IMR-90 (cell line): ENCODE measurements at regions of chr2 and their contacts with region 1.

Region 1: GRCh38 chr2:65432227-65433190 is at the start of gene SPRED2:
- DNase-seq: peak; percentile 97
- ATAC-seq: peak; percentile 53
- H3K4me3 ChIP-seq: peak within 1 kb of the TSS; percentile 88
- H3K27ac ChIP-seq: peak within 1 kb of the TSS; percentile 79
- H3K4me1 ChIP-seq: peaks cover 7% of the 10 kb centered on the region; the same call in 1 of the 2 replicates
- H3K27me3 ChIP-seq: no peaks in the 10 kb centered on the region
- CTCF ChIP-seq: 0 out of 2 replicates have a peak, but pooled peaks have one; percentile 6
- POLR2A ChIP-seq: peak; percentile 81
- RAD21 ChIP-seq: peak; percentile 26; the same call in 1 of the 2 replicates
- total RNA-seq, gene SPRED2: 4.7 and 4.8 TPM in 2 replicates

Region 2: DNA sequence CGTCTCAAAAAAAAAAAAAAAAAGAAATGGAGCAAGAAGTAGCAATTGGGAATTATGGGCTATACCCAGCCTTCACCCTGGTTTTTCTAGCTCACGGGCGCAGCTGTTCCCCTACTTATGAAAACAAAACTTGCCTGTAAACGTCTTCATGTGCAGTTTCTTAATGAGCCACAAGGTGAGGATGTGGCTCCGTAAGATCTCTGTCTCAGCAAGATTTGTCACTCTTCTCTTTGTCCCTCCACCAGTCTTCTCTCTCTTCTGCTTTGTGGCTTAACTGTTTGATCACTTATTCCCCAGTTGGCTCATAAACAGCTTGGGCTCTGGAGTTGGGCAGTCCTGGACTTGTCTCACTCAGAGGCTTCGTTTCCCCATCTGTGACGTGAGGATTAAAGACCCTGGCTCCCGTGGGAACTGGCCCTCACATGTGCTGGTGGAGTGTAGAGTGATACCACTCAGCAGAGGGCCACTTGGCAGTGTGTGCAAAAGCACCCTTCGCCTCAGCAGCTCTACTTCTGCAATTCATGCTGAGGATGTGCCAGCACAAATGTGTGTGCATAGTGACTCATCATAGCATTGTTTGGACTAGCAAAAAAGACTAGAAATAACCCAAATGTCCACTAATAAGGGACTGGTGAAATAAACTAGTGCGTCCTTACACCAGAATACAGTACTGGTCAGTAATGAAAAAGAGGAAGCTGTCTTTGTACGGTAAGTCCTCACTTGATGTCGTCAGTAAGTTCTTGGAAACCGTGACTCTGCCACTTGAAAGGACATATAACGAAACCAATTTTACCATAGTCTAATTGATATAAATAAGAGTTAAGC is 367.6 kb before region 1 on chr2:
- CTCF ChIA-PET with region 1: no interaction called
- POLR2A ChIA-PET with region 1: no interaction called
- dilution Hi-C with region 1: no loop called
- in situ Hi-C with region 1: no loop called
- intact Hi-C with region 1: loop called (anchors 10 kb)
- DNase-seq: peak; percentile 96
- ATAC-seq: peak; percentile 83
- H3K4me3 ChIP-seq: no peak overlapping the region
- H3K27ac ChIP-seq: peak overlapping the region; percentile 35; the same call in 1 of the 2 replicates
- H3K4me1 ChIP-seq: peaks cover 26% of the 10 kb centered on the region
- H3K27me3 ChIP-seq: no peaks in the 10 kb centered on the region
- CTCF ChIP-seq: peak; percentile 52
- POLR2A ChIP-seq: peak; percentile 14; the same call in 1 of the 2 replicates
- RAD21 ChIP-seq: peak; percentile 62

Region 3: GRCh38 chr2:65300761-65301711 is 131.5 kb before region 1 on chr2:
- CTCF ChIA-PET with region 1: no interaction called
- POLR2A ChIA-PET with region 1: no interaction called
- dilution Hi-C with region 1: no loop called
- in situ Hi-C with region 1: no loop called
- intact Hi-C with region 1: loop called (anchors 1 kb)
- DNase-seq: peak; percentile 89
- ATAC-seq: peak; percentile 90
- H3K4me3 ChIP-seq: peak overlapping the region; percentile 12; the same call in 1 of the 2 replicates
- H3K27ac ChIP-seq: peak overlapping the region; percentile 80
- H3K4me1 ChIP-seq: peaks cover 23% of the 10 kb centered on the region
- H3K27me3 ChIP-seq: no peaks in the 10 kb centered on the region
- CTCF ChIP-seq: no peak
- POLR2A ChIP-seq: peak; percentile 27; the same call in 1 of the 2 replicates
- RAD21 ChIP-seq: no peak

Region 4: DNA sequence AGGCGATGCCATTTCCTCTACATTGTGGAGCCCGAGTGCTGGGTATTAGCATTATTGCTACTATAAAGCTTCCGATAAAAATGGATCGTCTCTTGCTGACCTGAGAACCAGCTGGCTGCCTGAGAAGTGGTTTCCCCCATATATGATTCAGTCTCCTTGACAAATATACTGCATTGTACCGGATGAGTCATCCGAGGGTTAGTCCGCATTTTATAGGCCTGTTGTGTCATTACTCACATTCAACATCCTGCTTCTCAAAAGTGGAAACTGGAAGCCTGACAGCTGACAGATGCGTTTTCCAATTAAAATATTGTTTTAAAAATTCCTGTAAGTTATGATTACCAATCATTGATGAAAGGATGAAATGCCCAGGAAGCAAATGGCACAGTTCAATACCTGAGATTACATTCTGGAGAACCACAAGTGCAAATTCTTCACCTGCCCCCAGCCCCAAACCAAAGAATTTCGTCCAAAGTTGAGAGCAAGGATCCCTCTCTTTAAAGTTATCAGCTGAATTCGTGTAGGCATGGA is 65.8 kb before region 1 on chr2:
- CTCF ChIA-PET with region 1: no interaction called
- POLR2A ChIA-PET with region 1: no interaction called
- dilution Hi-C with region 1: no loop called
- in situ Hi-C with region 1: no loop called
- intact Hi-C with region 1: loop called (anchors 5 kb)
- DNase-seq: peak; percentile 98
- ATAC-seq: peak; percentile 68
- H3K4me3 ChIP-seq: no peak overlapping the region
- H3K27ac ChIP-seq: peak overlapping the region; percentile 21; the same call in 1 of the 2 replicates
- H3K4me1 ChIP-seq: peaks cover 21% of the 10 kb centered on the region
- H3K27me3 ChIP-seq: no peaks in the 10 kb centered on the region
- CTCF ChIP-seq: no peak
- POLR2A ChIP-seq: peak; percentile 63; the same call in 1 of the 2 replicates
- RAD21 ChIP-seq: no peak

Region 5: DNA sequence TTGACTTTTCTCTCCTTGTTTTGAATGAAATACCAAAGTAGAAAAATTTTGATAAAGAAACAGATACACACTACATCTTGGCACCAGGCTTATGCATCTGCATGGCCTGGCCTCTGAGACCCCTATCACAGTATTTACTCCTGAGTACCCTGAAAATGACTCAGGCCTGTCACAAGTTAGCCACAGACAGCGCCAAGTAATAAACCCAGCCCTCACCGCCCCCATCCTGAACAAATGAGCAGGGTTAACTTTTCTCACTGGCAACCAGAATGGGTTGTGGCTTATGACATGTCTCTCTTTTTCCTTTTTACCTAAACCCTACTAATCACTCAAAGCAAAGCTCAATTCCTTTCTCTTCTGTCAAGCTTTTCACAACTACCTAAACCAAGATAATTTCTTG is 35.4 kb before region 1 on chr2:
- CTCF ChIA-PET with region 1: no interaction called
- POLR2A ChIA-PET with region 1: no interaction called
- dilution Hi-C with region 1: no loop called
- in situ Hi-C with region 1: no loop called
- intact Hi-C with region 1: no loop called
- DNase-seq: peak; percentile 47
- ATAC-seq: peak; percentile 38
- H3K4me3 ChIP-seq: no peak overlapping the region
- H3K27ac ChIP-seq: no peak overlapping the region
- H3K4me1 ChIP-seq: peaks cover 11% of the 10 kb centered on the region
- H3K27me3 ChIP-seq: no peaks in the 10 kb centered on the region
- CTCF ChIP-seq: no peak
- POLR2A ChIP-seq: no peak
- RAD21 ChIP-seq: no peak

Region 6: DNA sequence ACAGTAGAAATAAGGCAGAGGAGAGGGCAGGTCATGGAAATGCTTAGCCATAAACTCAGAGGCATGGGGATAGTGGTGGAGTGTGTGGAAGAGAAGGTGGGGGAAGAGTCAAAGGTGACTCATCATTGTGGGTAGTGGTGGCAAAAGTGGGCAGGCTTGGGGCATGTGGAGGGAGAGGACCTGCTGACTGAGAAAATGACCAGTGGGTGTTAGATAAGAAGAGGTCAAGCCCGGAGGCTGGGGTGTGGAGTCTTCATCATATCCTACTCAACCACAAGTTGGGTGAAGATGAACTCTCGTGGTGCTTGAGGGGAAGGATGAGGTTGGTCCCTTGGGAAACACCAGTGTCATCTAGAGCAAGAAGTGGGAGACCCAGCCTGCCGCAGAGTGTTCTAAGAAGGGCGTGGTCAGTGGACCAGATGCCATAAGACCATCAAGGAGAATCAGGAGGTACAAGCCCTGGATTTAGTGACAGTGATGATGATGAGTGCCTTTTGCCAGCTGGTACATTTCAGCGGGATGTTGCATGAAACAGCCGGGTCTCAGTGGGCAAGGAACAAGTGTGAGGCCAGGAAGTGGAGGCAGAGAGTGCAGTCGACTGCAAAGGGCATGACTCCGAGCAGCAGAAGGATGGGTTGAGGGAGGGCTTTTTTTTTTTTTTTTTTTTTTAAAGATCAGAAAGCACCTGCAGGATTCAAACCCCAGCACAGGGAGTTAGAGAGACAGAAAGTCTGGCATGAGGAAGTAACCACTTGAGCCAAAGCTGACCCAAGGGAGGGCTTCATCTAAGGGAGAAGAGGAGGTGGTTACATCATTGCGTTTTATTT is 122.5 kb after region 1 on chr2:
- CTCF ChIA-PET with region 1: no interaction called
- POLR2A ChIA-PET with region 1: interaction called, 4 read pairs
- dilution Hi-C with region 1: no loop called
- in situ Hi-C with region 1: no loop called
- intact Hi-C with region 1: loop called (anchors 1 kb)
- DNase-seq: peak; percentile 15
- ATAC-seq: peak; percentile 44; the same call in 1 of the 2 replicates
- H3K4me3 ChIP-seq: no peak overlapping the region
- H3K27ac ChIP-seq: no peak overlapping the region
- H3K4me1 ChIP-seq: 0 out of 2 replicates have a peak, but pooled peaks cover 2% of the 10 kb centered on the region
- H3K27me3 ChIP-seq: peaks cover 11% of the 10 kb centered on the region
- CTCF ChIP-seq: no peak
- POLR2A ChIP-seq: no peak
- RAD21 ChIP-seq: no peak